ENCODE measurements at regions of chr12 and their contacts with region 1.

Region 1: DNA sequence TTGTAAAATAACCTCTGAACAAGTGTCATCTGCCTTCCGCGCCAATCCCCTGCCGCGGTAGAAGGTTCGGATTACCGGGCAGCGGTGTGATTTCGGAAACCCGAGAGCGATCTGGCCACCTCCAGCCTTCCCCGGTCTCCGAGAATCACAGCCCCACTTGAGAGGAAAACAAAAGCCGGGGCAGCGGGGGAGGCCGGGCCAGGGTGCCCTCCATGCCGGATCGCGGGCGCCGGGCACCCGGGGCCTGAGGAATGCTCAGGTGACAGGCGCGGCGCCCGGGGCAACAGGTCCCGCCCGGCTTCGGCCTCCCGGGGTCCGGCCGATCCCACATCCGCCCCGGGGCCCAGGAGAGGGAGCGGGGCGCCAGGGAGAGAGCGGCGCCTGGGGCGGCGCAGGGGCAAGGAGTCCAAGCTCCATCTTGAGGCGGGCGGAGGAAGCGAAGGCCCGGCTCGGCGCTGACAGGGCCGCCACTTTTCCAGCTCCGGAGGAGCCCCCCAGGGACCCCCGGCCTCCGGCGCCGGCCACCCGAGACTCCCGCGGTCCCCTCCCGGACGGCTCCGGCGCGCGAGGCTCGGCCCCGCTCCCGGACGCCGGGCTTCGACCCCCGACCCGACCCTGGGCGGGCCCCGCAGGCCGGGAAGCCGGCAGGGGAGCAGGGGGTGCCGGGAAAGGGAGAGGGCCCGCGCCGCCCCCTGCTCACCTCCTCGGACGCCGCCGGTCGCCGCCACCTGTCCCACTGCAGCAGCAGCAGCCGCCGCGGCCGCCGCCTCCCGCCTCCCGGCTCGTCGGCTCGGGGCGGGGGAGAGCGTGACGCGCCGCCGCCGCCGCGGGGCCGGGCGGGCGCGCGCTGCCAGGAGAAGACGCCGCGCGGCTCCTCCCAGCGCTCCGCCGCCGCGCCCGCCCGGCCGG is at the start of gene CLIP1:
- DNase-seq: peak; percentile 82
- H3K4me3 ChIP-seq: peak within 1 kb of the TSS; percentile 78 to 99 (median 88)
- H3K27ac ChIP-seq: peak within 1 kb of the TSS; percentile 97 to 100 (median 100)
- H3K4me1 ChIP-seq: peaks cover 0 to 54% (median 47%) of the 10 kb centered on the region in 4 donors
- H3K27me3 ChIP-seq: no peaks in the 10 kb centered on the region
- CTCF ChIP-seq: peak in 3 of 4 experiments; percentile 12 to 55 (median 20)
- EP300 ChIP-seq: no peak
- POLR2A ChIP-seq: no peak
- total RNA-seq, gene CLIP1: 159 to 257 (median 196) TPM

Region 2: GRCh38 chr12:122363782-122364181 is 58.3 kb before region 1 on chr12:
- intact Hi-C with region 1: loop called (anchors 5 kb)
- DNase-seq: peak; percentile 85
- H3K4me3 ChIP-seq: no peak overlapping the region
- H3K27ac ChIP-seq: peak overlapping the region in 3 of 4 donors; percentile 19 to 94 (median 90)
- H3K4me1 ChIP-seq: peaks cover 0 to 58% (median 38%) of the 10 kb centered on the region in 4 donors
- H3K27me3 ChIP-seq: no peaks in the 10 kb centered on the region
- CTCF ChIP-seq: no peak
- EP300 ChIP-seq: peak in 2 of 4 donors; percentile 18 to 74
- POLR2A ChIP-seq: no peak

Region 3: DNA sequence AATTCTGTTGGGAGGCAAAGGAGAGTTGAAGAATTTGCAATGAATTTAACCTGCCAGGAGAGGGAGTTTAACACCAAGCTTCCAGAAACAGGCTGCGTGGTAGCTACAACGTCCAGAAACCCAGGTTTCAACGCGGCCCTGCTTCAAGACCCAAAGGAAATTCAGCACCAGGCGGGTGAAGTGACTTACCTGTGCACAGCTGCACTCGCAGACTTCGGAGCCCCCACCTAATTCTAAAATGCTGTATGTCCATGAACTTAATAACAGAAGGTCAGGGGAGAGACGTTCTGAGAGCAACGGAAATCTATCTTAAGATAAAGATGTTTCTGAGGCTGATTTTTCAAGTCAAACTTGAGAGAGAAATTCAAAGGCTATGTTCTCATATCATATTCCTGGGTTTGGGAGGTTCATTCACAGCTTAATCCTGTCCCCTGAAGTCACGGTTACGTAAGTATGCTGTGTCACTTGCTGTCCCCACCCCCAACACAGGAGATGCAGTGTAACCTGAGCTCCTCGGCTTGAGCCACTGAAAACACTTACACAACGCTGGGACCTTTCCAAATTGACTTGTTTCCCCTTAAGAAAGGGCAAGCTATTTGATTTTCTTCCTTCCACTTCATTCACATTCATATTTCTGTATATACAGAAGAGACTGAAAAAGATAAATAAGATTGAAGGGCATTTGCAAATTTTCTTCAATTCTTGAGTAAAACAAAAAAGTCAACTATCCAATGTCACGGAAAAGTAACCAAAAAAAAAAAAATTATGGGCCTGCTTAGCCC is 22.3 kb before region 1 on chr12:
- intact Hi-C with region 1: loop called (anchors 1 kb)
- DNase-seq: peak; percentile 92
- H3K4me3 ChIP-seq: peak overlapping the region; percentile 3 to 22 (median 12)
- H3K27ac ChIP-seq: peak overlapping the region; percentile 85 to 99 (median 90)
- H3K4me1 ChIP-seq: peaks cover 0 to 88% (median 71%) of the 10 kb centered on the region in 4 donors
- H3K27me3 ChIP-seq: no peaks in the 10 kb centered on the region
- CTCF ChIP-seq: peak in 3 of 4 experiments; percentile 61 to 81 (median 75)
- EP300 ChIP-seq: peak in 1 of 4 donors; percentile 37
- POLR2A ChIP-seq: no peak

Measured in sigmoid colon (tissue), 7 donors.